ENCODE measurements at regions of chr1 and their contacts with region 1.

Region 1: DNA sequence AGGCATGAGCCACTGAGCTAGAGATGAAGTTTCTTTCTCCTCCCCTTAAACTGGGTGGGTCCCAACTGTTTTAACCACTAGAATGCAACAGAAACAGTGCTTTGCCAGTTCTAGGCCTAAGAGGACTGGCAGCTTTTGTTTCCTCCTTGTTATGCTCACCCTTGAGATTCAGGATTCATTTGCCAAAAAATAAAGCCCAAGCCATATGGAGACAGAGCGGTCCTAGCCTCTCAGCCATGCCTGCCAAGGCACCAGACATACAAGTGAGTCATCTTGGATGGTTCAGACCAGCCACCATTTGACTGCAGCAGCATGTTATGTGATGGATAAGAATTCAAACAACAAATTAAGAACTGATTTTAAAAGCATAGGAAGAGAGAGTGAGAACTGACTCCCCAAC is 38.1 kb upstream of the STUM start:
- DNase-seq: no peak
- ATAC-seq: peak; percentile 41; the same call in 1 of the 2 replicates
- H3K4me3 ChIP-seq: no peak overlapping the region
- H3K27ac ChIP-seq: no peak overlapping the region
- H3K4me1 ChIP-seq: peaks cover 9% of the 10 kb centered on the region; the same call in 1 of the 2 replicates
- H3K27me3 ChIP-seq: peaks cover 19% of the 10 kb centered on the region
- CTCF ChIP-seq: no peak

Region 2: GRCh38 chr1:226496453-226497015 is 13.9 kb before region 1 on chr1:
- CTCF ChIA-PET with region 1: interaction called, 10 read pairs
- POLR2A ChIA-PET with region 1: interaction called, 4 read pairs
- intact Hi-C with region 1: no loop called
- DNase-seq: no peak
- ATAC-seq: no peak
- H3K4me3 ChIP-seq: no peak overlapping the region
- H3K27ac ChIP-seq: no peak overlapping the region
- H3K4me1 ChIP-seq: peaks cover 7% of the 10 kb centered on the region; the same call in 1 of the 2 replicates
- H3K27me3 ChIP-seq: peaks cover 1% of the 10 kb centered on the region; the same call in 1 of the 2 replicates
- CTCF ChIP-seq: no peak

Region 3: DNA sequence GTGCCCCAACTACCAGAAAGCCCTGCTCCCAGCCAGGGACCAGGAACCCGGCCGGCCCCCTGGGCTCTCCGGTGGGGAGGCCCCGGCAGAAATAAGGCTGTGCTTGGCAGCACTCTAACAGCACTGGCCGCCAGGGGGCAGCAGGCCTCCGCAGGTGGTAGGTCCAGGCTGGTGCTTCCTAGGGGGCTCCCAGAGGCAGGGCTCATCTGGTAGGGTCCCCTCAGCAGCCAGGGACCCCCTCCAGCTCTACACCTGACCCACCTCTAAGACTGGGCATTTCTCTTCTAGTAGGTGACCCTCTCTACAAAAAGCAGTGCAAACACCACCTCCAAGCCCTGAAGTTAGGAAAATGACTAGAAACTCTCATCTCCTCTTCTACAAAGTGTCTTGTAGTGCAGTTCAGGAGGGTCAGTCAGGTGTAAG is 123.7 kb after region 1 on chr1:
- CTCF ChIA-PET with region 1: no interaction called
- POLR2A ChIA-PET with region 1: no interaction called
- intact Hi-C with region 1: no loop called
- DNase-seq: peak; percentile 88
- ATAC-seq: peak; percentile 91
- H3K4me3 ChIP-seq: no peak overlapping the region
- H3K27ac ChIP-seq: peak overlapping the region; percentile 72; the same call in 1 of the 2 replicates
- H3K4me1 ChIP-seq: peaks cover 21% of the 10 kb centered on the region
- H3K27me3 ChIP-seq: no peaks in the 10 kb centered on the region
- CTCF ChIP-seq: peak; percentile 100